CD8-positive, alpha-beta T cell (primary cell): ENCODE measurements at regions of chr1 and their contacts with region 1.

Region 1: GRCh38 chr1:94805912-94806311 is 14.2 kb upstream of the SLC44A3 start:
- DNase-seq: peak in 8 of 9 experiments; percentile 22 to 61 (median 44)
- ATAC-seq: peak; percentile 70
- H3K4me3 ChIP-seq: no peak overlapping the region
- H3K4me3 Mint-ChIP-seq: no peak overlapping the region
- H3K27ac ChIP-seq: no peak overlapping the region
- H3K27ac Mint-ChIP-seq: no peak overlapping the region
- H3K4me1 ChIP-seq: peaks cover 5% of the 10 kb centered on the region
- H3K4me1 Mint-ChIP-seq: peaks cover 10% of the 10 kb centered on the region
- H3K27me3 ChIP-seq: no peaks in the 10 kb centered on the region
- H3K27me3 Mint-ChIP-seq: peaks cover 5% of the 10 kb centered on the region
- CTCF ChIP-seq: peak; percentile 99

Region 2: GRCh38 chr1:93304716-93305138 is 1501.2 kb before region 1 on chr1:
- CTCF ChIA-PET with region 1: no interaction called
- POLR2A ChIA-PET with region 1: no interaction called
- intact Hi-C with region 1: loop called in 1 of 2 experiments (anchors 10 kb)
- DNase-seq: peak in 7 of 9 experiments; percentile 15 to 77 (median 53)
- ATAC-seq: peak; percentile 71
- H3K4me3 ChIP-seq: no peak overlapping the region
- H3K4me3 Mint-ChIP-seq: no peak overlapping the region
- H3K27ac ChIP-seq: no peak overlapping the region
- H3K27ac Mint-ChIP-seq: no peak overlapping the region
- H3K4me1 ChIP-seq: no peaks in the 10 kb centered on the region
- H3K4me1 Mint-ChIP-seq: no peaks in the 10 kb centered on the region
- H3K27me3 ChIP-seq: no peaks in the 10 kb centered on the region
- H3K27me3 Mint-ChIP-seq: no peaks in the 10 kb centered on the region
- CTCF ChIP-seq: peak; percentile 95

Region 3: DNA sequence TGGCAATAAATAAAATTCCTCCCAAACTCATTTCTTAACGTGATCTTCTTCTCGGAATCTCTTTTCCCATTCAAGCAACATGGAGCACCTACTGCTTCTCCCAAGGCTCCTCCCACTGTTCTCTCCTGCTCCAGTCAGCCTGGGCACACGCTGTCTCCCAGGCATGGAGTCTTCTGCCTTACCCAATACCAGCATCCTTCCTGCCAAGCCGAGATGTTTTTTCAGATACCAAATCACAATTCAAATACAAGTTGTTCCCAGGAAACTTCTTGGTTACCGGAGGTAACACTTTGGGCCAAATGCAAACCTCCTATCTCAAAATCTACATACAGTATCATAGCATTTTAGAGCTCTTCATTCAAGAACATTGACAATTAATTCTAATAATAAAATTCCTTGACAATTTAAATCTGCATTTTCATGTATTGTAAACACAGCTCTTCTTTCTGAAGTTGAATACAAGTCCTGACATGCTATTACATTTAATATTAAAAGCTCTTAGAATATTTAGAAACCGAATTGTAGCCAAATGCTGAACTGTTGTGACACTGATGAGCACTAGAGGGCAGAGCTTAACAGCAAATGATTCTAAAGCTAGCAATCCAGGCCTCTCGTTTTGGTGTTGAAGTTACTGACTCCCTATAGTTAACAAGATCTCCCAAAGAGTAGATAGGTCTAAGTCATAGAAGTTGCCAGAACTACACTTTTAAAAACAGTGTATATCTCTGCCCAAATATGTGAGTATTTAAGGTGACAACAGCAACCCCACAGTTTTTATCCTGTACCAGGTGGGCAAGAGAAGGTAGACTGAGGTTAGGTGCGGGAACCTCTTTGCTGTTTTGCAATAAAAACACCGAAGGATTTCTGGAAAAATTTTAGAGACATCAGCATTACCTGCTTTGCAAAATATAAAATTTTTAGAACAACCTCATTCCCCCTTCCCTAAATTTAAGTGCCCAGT is 1176.5 kb before region 1 on chr1:
- CTCF ChIA-PET with region 1: no interaction called
- POLR2A ChIA-PET with region 1: no interaction called
- intact Hi-C with region 1: loop called (anchors 2 to 10 kb)
- DNase-seq: peak; percentile 8 to 78 (median 37)
- ATAC-seq: peak; percentile 93
- H3K4me3 ChIP-seq: no peak overlapping the region
- H3K4me3 Mint-ChIP-seq: no peak overlapping the region
- H3K27ac ChIP-seq: no peak overlapping the region
- H3K27ac Mint-ChIP-seq: no peak overlapping the region
- H3K4me1 ChIP-seq: no peaks in the 10 kb centered on the region
- H3K4me1 Mint-ChIP-seq: no peaks in the 10 kb centered on the region
- H3K27me3 ChIP-seq: no peaks in the 10 kb centered on the region
- H3K27me3 Mint-ChIP-seq: no peaks in the 10 kb centered on the region
- CTCF ChIP-seq: peak; percentile 90

Region 4: GRCh38 chr1:94045465-94046056 is 760.4 kb before region 1 on chr1:
- CTCF ChIA-PET with region 1: interaction called, 5 read pairs
- POLR2A ChIA-PET with region 1: no interaction called
- intact Hi-C with region 1: loop called in 1 of 2 experiments (anchors 5 kb)
- DNase-seq: peak in 7 of 9 experiments; percentile 1 to 51 (median 25)
- ATAC-seq: no peak
- H3K4me3 ChIP-seq: peak overlapping the region; percentile 20 to 26
- H3K4me3 Mint-ChIP-seq: peak overlapping the region; percentile 55
- H3K27ac ChIP-seq: no peak overlapping the region
- H3K27ac Mint-ChIP-seq: no peak overlapping the region
- H3K4me1 ChIP-seq: no peaks in the 10 kb centered on the region
- H3K4me1 Mint-ChIP-seq: peaks cover 5% of the 10 kb centered on the region
- H3K27me3 ChIP-seq: peaks cover 0 to 2% of the 10 kb centered on the region in 2 experiments
- H3K27me3 Mint-ChIP-seq: peaks cover 7% of the 10 kb centered on the region
- CTCF ChIP-seq: peak; percentile 22

Region 5: DNA sequence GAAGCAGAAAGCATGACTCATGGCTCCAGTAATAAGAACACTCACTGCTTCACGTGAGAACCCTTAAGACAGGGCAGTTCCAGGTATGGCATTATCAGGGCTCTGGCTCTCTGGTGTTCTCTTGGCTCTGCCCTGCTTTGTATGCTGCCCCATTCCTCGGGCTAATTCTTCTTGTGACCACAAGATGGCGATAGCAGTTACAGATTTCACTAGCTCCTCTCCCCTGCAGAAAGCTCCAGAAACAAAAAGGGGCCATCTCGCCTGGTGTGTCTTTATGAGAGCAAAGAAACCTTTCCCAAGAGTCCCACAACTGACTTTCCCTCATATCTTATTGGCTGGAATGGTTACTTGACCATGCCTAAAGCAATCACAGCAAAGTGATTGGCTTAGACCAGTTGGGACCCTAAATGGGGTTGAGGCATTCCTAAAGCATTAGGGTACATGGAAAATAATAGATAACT is 324.4 kb before region 1 on chr1:
- CTCF ChIA-PET with region 1: interaction called, 43 read pairs
- POLR2A ChIA-PET with region 1: no interaction called
- intact Hi-C with region 1: loop called (anchors 1 kb)
- DNase-seq: peak in 7 of 9 experiments; percentile 11 to 68 (median 32)
- ATAC-seq: peak; percentile 65
- H3K4me3 ChIP-seq: no peak overlapping the region
- H3K4me3 Mint-ChIP-seq: no peak overlapping the region
- H3K27ac ChIP-seq: no peak overlapping the region
- H3K27ac Mint-ChIP-seq: no peak overlapping the region
- H3K4me1 ChIP-seq: no peaks in the 10 kb centered on the region
- H3K4me1 Mint-ChIP-seq: no peaks in the 10 kb centered on the region
- H3K27me3 ChIP-seq: no peaks in the 10 kb centered on the region
- H3K27me3 Mint-ChIP-seq: no peaks in the 10 kb centered on the region
- CTCF ChIP-seq: peak; percentile 76

Region 6: GRCh38 chr1:94522304-94522703 is 283.6 kb before region 1 on chr1:
- CTCF ChIA-PET with region 1: no interaction called
- POLR2A ChIA-PET with region 1: no interaction called
- intact Hi-C with region 1: loop called (anchors 2 to 10 kb)
- DNase-seq: peak in 2 of 9 experiments; percentile 5 to 8
- ATAC-seq: no peak
- H3K4me3 ChIP-seq: no peak overlapping the region
- H3K4me3 Mint-ChIP-seq: no peak overlapping the region
- H3K27ac ChIP-seq: no peak overlapping the region
- H3K27ac Mint-ChIP-seq: no peak overlapping the region
- H3K4me1 ChIP-seq: no peaks in the 10 kb centered on the region
- H3K4me1 Mint-ChIP-seq: no peaks in the 10 kb centered on the region
- H3K27me3 ChIP-seq: no peaks in the 10 kb centered on the region
- H3K27me3 Mint-ChIP-seq: no peaks in the 10 kb centered on the region
- CTCF ChIP-seq: no peak

Region 7: DNA sequence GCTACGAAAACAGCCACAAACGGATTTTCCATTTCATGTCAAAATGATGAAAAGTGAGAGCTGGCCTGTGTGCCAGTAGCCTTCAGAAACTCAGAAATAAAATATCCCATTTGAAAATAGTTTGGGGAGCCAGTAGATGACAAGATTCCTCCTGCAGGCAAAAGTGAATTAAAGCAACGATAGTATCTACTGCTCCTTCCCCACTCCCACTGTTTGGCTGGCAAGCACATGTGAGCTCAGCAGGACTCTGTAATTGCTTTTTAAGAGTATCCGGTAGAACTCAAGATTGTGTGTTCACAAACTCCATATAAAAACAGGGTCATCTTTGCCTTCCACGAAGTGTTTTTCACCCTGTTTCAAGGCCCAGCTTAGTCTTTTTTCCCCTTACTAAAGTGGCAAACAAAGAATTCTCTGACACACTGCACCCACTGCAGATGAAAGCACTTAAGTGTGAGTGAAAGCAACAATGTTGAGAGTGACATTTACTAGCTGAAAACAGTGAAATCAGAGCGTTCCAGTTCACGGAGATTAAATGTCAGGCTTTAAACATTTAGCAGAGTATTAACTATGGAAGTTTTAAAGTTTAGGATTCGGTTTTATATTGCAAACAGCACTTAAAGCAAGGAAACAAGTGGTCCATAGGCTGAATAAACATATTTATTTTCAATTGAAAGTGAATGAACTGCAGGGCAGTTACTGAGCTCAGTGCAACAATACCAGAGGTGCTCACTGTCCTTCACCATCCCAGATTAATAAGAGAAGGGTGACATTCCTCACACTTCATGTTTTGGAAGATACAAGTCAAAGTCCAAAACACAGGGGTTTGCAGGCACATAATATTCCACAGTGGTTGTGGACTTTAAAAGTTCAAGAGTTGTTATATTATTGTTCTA is 196.9 kb after region 1 on chr1:
- CTCF ChIA-PET with region 1: no interaction called
- POLR2A ChIA-PET with region 1: no interaction called
- intact Hi-C with region 1: no loop called
- DNase-seq: no peak
- ATAC-seq: no peak
- H3K4me3 ChIP-seq: no peak overlapping the region
- H3K4me3 Mint-ChIP-seq: no peak overlapping the region
- H3K27ac ChIP-seq: no peak overlapping the region
- H3K27ac Mint-ChIP-seq: no peak overlapping the region
- H3K4me1 ChIP-seq: no peaks in the 10 kb centered on the region
- H3K4me1 Mint-ChIP-seq: no peaks in the 10 kb centered on the region
- H3K27me3 ChIP-seq: no peaks in the 10 kb centered on the region
- H3K27me3 Mint-ChIP-seq: no peaks in the 10 kb centered on the region
- CTCF ChIP-seq: no peak